ENCODE measurements at regions of chr2 and their contacts with region 1.

Region 1: DNA sequence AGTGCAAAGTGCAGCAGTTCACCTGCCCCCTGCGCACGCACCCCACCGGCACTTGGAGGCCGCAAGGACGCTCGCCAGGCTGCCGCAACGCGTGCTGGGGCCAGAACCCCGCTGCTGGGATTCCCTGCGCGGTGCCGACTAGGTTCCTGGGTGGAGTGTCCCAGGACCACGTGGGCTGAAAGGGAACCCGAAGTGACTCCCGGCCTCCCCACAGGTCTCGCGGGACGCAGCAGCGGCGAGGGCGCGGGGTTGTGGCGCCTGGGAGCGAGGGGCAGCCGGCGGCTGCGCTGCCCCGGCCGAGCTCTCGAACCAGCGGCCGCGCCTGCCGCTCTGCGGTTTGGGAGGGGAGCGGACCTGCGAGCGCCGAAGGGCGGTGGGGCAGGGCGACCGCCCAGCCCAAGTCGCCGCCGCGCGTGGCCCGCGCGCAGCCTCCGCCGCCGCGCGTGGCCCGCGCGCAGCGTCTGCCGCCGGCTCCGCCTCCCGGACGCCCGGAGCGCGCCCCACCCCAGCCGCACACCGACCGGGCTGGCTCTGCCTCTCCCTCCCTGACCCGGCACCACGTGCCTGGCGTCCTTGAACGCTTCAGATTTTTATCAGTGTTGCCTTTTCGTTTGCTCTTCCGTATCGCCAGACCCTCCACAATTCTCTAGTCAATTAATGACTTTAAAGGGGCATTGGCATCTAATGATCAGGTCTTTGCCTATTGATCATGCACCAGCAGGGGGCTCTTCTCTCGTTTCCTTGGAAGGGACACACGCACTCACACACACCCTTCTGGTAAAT is at the start of gene FTCDNL1:
- DNase-seq: peak; percentile 17 to 82 (median 56)
- ATAC-seq: peak; percentile 90
- H3K4me3 ChIP-seq: peak within 1 kb of the TSS; percentile 64
- H3K4me3 Mint-ChIP-seq: peak within 1 kb of the TSS; percentile 93
- H3K27ac ChIP-seq: no peak within 1 kb of the TSS
- H3K27ac Mint-ChIP-seq: peak within 1 kb of the TSS; percentile 10
- H3K4me1 ChIP-seq: peaks cover 9% of the 10 kb centered on the region
- H3K4me1 Mint-ChIP-seq: peaks cover 6% of the 10 kb centered on the region
- H3K27me3 ChIP-seq: no peaks in the 10 kb centered on the region
- H3K27me3 Mint-ChIP-seq: no peaks in the 10 kb centered on the region
- CTCF ChIP-seq: peak; percentile 65
- total RNA-seq, gene FTCDNL1: 0.78 to 1.3 TPM

Region 2: GRCh38 chr2:199870581-199870980 is 19.7 kb after region 1 on chr2:
- CTCF ChIA-PET with region 1: no interaction called
- POLR2A ChIA-PET with region 1: no interaction called
- intact Hi-C with region 1: no loop called
- DNase-seq: no peak
- ATAC-seq: no peak
- H3K4me3 ChIP-seq: no peak overlapping the region
- H3K4me3 Mint-ChIP-seq: no peak overlapping the region
- H3K27ac ChIP-seq: no peak overlapping the region
- H3K27ac Mint-ChIP-seq: no peak overlapping the region
- H3K4me1 ChIP-seq: no peaks in the 10 kb centered on the region
- H3K4me1 Mint-ChIP-seq: no peaks in the 10 kb centered on the region
- H3K27me3 ChIP-seq: no peaks in the 10 kb centered on the region
- H3K27me3 Mint-ChIP-seq: peaks cover 35% of the 10 kb centered on the region
- CTCF ChIP-seq: no peak

Region 3: GRCh38 chr2:199911052-199911876 is 60.4 kb after region 1 on chr2 and contains the start of gene C2orf69:
- CTCF ChIA-PET with region 1: no interaction called
- POLR2A ChIA-PET with region 1: no interaction called
- intact Hi-C with region 1: loop called in 1 of 2 experiments (anchors 5 kb)
- DNase-seq: peak; percentile 78 to 97 (median 88)
- ATAC-seq: peak; percentile 79
- H3K4me3 ChIP-seq: peak within 1 kb of the TSS; percentile 78
- H3K4me3 Mint-ChIP-seq: peak within 1 kb of the TSS; percentile 99
- H3K27ac ChIP-seq: peak within 1 kb of the TSS; percentile 67 to 80
- H3K27ac Mint-ChIP-seq: peak within 1 kb of the TSS; percentile 95
- H3K4me1 ChIP-seq: peaks cover 17% of the 10 kb centered on the region
- H3K4me1 Mint-ChIP-seq: peaks cover 40% of the 10 kb centered on the region
- H3K27me3 ChIP-seq: no peaks in the 10 kb centered on the region
- H3K27me3 Mint-ChIP-seq: no peaks in the 10 kb centered on the region
- CTCF ChIP-seq: no peak
- total RNA-seq, gene C2orf69: 12.5 to 13.7 TPM

Measured in CD4-positive, alpha-beta T cell (primary cell).